Motor neuron (in vitro differentiated cells): ENCODE measurements at regions of chr17 and their contacts with region 1.

Region 1: GRCh38 chr17:49315551-49316257 is 46.3 kb downstream of the ZNF652 start:
- ATAC-seq: peak; percentile 61 to 100 (median 89)
- H3K4me3 ChIP-seq: no peak overlapping the region
- H3K27ac ChIP-seq: no peak overlapping the region
- H3K4me1 ChIP-seq: peaks cover 0 to 3% of the 10 kb centered on the region in 2 donors

Region 2: GRCh38 chr17:49390548-49391324 is 75.0 kb after region 1 on chr17:
- in situ Hi-C with region 1: loop called in 4 of 9 experiments (anchors 10 kb)
- ATAC-seq: no peak
- H3K4me3 ChIP-seq: no peak overlapping the region
- H3K27ac ChIP-seq: no peak overlapping the region
- H3K4me1 ChIP-seq: no peaks in the 10 kb centered on the region